Cardiac septum (tissue), 1 donor: ENCODE measurements at regions of chr2 and their contacts with region 1.

Region 1: GRCh38 chr2:73085691-73086360 is 14.3 kb upstream of the SFXN5 start:
- DNase-seq: peak; percentile 92

Region 2: DNA sequence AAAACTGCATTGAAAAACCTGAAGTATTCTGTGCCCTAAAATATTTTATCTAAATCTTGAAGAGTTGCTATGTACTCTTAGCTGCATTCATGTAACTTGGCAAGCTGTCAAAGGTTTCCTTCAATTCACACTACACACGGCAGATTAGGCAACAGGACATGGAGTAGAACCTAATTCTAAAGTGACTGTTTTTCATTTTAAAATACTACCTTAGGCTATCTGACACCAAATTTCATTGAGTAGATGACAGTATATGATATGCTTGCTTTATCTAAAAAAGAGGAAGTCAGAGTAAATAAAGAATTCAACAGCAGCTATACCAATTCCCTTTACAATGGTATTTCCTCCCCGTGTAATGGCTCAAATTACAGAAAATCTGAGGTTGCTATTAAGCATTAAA is 305.3 kb before region 1 on chr2:
- intact Hi-C with region 1: no loop called
- DNase-seq: no peak

Region 3: DNA sequence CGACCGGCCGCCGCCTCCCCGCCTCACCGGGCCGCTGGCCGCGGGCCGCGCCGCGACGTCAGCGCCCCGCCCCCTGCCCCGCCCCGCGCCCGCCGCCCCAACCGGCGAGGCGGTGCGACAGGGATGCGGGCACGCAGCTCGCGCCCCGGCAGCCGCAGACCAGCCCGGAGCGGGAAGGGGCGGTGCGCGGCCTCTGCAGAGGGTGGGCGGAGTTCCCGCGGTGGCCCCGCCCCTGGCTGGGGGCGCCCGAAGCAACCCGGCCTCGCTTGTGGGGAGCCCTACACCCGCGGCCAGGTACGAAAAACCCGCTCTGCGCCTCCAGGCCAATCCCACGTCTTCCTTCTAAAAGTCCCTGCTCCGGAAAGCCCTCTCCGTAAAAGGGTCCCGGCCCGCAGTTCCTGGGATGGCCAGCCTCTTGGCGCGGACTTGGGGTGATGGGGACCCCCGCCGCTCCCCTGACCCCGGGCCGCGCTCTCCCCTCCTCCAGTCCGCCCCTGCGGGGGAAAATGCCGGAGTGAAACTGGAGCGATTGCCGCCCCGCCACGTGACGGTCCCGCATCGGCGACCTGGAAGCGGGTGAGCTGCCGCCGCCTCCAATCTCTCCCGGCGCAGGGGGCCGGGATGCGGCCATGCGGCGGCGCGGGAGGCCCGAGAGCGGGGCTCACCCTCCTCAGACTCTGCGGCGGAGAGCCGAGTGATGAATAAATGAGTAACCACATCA is 27.2 kb after region 1 on chr2 and contains the start of gene RAB11FIP5:
- intact Hi-C with region 1: loop called (anchors 2 kb)
- DNase-seq: peak; percentile 88
- total RNA-seq, gene RAB11FIP5: 38.1 TPM

Region 4: DNA sequence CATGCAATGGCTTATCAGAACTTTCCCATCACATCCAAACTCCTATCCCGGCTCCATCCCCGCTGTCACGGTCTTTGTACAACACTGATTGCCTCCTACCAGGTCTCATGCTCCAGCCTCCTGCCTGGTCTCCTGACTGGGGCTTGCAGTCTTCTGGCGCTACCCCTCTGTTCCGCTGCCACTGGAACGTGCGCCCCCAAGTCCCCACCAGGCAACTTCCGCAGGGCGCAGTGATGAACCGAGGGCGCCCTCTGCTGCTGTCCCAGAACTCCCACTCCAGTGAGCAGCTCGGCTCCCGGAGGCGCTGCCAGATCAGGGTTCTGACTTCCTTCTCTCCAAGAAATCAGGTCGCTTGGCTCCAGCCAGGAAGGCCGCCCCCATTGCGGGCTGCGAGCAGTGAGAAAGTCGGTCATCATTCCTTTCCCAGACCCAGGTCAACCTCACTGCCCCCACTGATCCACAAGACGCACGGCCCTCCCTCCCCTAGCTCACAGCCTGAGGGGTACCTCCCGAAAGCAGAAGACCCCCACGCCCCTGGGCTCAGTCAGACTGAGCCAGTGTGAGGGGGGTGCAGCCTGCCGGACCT is 70.8 kb after region 1 on chr2:
- intact Hi-C with region 1: loop called (anchors 1 kb)
- DNase-seq: no peak